Breast epithelium (tissue), 4 donors: ENCODE measurements at regions of chr7 and their contacts with region 1.

Region 1: GRCh38 chr7:127440206-127440605 is 47.7 kb upstream of the ZNF800 start:
- DNase-seq: no peak
- H3K4me3 ChIP-seq: no peak overlapping the region
- H3K27ac ChIP-seq: no peak overlapping the region
- H3K4me1 ChIP-seq: no peaks in the 10 kb centered on the region
- H3K27me3 ChIP-seq: no peaks in the 10 kb centered on the region
- CTCF ChIP-seq: no peak
- POLR2A ChIP-seq: no peak

Region 2: DNA sequence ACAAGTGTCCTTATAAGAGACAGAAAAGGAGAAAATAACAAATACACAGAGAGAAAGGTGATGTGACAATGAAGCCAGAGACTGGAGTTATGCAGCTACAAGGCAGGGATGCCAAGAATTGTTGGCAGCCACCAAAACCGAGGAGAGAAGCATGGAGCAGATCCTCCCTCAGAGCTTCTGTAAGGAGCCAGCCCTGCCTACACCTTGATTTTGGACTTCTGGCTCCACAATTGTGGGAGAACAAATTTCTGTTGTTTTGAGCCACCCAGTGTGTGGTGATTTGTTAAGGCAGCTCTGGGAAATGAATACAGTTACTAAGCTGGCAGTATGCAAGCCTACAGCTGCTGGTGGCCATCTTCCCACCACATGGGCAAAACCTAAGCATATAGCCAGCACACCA is 351.1 kb before region 1 on chr7:
- intact Hi-C with region 1: loop called (anchors 5 kb)
- DNase-seq: no peak
- H3K4me3 ChIP-seq: no peak overlapping the region
- H3K27ac ChIP-seq: no peak overlapping the region
- H3K4me1 ChIP-seq: no peaks in the 10 kb centered on the region
- H3K27me3 ChIP-seq: no peaks in the 10 kb centered on the region
- CTCF ChIP-seq: no peak
- POLR2A ChIP-seq: no peak